ENCODE measurements at regions of chr3 and their contacts with region 1.

Region 1: DNA sequence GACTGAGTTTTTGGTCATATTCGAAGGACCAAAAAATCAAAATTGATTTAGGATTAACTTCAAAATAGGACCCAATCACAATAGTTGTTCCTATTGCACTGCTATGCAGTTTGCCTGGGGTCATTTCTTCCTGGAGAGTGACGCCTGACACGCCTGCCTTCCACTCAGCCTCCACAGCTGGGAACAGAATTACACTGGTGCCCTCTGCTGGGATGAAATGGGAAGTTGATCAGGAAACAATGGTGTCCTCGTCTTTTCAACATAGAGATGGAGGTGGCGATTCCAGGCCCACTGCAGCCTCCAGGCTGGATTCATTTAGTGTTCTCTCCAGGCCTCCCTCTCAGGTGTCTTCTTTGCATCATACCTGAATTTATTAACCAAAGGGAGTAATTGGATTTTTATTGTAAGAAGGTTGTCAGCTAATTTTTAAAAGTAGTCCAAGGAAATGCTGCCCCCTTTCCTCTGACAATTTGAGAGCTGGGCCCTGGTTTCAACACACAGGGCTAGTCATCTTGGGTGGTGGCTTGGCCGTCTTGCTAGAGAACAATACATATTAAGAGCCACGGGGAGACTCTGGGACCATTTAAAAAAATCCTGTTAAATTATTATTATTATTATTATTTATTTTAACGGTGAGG is 69.7 kb downstream of the GAP43 start:
- DNase-seq: peak; percentile 79
- H3K4me3 ChIP-seq: no peak overlapping the region
- H3K27ac ChIP-seq: no peak overlapping the region
- H3K4me1 ChIP-seq: no peaks in the 10 kb centered on the region
- H3K27me3 ChIP-seq: no peaks in the 10 kb centered on the region
- CTCF ChIP-seq: peak; percentile 58 to 76 (median 74)
- EP300 ChIP-seq: no peak
- POLR2A ChIP-seq: no peak

Region 2: DNA sequence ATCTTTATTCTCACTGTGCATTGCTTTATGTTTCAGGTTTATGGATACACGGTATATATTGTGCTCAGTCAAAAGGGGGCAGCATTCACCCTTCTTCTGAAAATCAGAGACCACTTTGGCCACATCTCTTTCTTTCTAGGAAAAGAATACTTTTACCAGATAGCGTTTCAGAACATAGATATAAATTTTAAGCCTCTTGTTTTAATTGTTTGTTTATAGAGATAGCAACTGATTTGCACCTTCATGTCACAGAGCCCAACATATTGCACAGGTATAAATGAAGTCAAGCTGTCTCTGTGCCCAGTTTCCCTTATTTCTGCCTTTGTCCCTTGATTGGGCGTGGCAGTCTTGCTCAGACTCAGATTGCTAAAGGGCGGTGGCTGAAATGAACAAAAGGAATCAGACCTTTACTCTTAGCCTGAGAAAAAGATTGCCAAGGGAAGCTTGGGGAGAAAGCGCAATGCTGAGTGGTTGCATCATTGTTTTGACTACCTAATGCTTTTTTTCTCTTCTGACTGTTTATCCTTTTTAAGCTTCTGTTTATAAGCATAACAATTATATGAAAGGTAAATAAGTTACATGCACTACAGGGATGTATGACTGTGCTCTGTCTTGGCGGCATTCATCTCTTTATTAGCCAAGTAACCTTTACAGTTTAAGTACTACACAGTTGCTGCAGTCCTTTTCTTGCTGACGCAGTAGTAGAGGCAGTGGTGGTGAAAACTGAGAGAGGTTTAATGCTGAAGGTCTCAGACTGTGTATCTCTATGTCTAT is 475.1 kb before region 1 on chr3:
- intact Hi-C with region 1: loop called (anchors 5 kb)
- DNase-seq: no peak
- H3K4me3 ChIP-seq: no peak overlapping the region
- H3K27ac ChIP-seq: no peak overlapping the region
- H3K4me1 ChIP-seq: peaks cover 0 to 11% (median 5%) of the 10 kb centered on the region in 4 donors
- H3K27me3 ChIP-seq: no peaks in the 10 kb centered on the region
- CTCF ChIP-seq: peak; percentile 15 to 57 (median 39)
- EP300 ChIP-seq: no peak
- POLR2A ChIP-seq: no peak

Region 3: DNA sequence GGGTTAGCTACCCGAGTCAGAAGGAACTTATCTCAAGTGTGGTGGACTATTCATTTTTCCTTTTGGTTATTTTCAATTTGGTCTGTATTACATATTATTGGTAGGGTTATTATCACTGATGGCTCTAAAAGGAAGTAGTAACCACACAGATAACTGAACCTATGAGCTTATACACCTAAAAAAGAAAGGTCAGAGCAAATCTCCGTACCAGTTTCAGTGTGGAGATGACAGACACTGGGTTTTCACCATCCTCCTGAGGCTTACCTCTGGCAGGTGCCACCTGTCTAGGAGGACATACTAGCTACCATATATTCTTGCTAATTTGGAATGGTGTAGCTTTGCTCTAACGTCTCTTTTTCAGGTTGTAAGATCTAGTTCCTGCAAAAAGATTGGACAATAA is 59.5 kb before region 1 on chr3:
- intact Hi-C with region 1: no loop called
- DNase-seq: no peak
- H3K4me3 ChIP-seq: no peak overlapping the region
- H3K27ac ChIP-seq: no peak overlapping the region
- H3K4me1 ChIP-seq: no peaks in the 10 kb centered on the region
- H3K27me3 ChIP-seq: no peaks in the 10 kb centered on the region
- CTCF ChIP-seq: no peak
- EP300 ChIP-seq: no peak
- POLR2A ChIP-seq: no peak

Region 4: DNA sequence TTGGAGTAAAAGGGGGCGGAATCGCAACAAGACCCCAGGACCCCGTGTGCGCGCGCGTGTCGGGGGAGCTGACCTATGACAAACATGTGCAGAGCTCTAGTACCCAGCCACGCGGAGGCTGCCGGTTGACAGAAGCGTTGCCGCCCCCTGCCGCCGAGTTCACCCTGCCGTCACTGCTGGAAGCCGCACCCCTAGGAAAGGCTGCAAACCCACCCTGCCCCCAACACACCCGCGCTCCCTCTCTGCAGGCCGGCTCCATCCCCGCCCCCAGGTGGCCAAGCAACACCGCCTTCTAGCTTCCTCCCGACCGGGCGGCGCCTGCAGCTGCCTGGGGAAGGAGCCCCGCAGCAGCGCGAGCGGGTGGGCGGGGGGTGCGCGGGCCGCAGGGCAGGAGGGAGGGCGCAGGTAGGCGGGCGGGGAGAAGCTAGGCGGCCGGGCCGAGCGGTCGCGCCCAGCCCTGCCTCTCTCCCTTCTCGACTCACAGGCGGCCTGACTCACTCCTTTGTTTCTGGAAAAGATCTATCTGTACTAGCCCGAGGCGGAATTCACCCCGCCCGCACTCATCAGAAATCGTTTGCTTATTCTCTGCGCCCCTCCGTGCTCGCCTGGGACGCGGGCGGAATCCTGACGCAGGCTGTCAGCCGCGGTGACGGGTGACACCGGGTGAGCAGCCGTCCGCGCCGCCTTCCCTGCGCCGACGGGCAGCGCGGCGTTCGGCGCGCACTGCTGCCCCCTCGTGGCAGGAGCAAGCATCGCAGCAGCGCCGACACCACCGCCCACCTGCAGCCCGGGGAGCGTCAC is 91.1 kb after region 1 on chr3:
- intact Hi-C with region 1: loop called (anchors 5 kb)
- DNase-seq: peak; percentile 94
- H3K4me3 ChIP-seq: peak overlapping the region; percentile 42 to 77 (median 74)
- H3K27ac ChIP-seq: peak overlapping the region; percentile 83 to 94 (median 86)
- H3K4me1 ChIP-seq: peaks cover 0 to 17% (median 7%) of the 10 kb centered on the region in 4 donors
- H3K27me3 ChIP-seq: no peaks in the 10 kb centered on the region
- CTCF ChIP-seq: peak; percentile 81 to 96 (median 88)
- EP300 ChIP-seq: no peak
- POLR2A ChIP-seq: no peak

Region 5: GRCh38 chr3:115843206-115843605 is 150.2 kb after region 1 on chr3:
- intact Hi-C with region 1: no loop called
- DNase-seq: no peak
- H3K4me3 ChIP-seq: no peak overlapping the region
- H3K27ac ChIP-seq: no peak overlapping the region
- H3K4me1 ChIP-seq: no peaks in the 10 kb centered on the region
- H3K27me3 ChIP-seq: no peaks in the 10 kb centered on the region
- CTCF ChIP-seq: no peak
- EP300 ChIP-seq: no peak
- POLR2A ChIP-seq: no peak